Posterior cingulate gyrus (tissue), 11 donors: ENCODE measurements at regions of chr12 and their contacts with region 1.

Region 1: DNA sequence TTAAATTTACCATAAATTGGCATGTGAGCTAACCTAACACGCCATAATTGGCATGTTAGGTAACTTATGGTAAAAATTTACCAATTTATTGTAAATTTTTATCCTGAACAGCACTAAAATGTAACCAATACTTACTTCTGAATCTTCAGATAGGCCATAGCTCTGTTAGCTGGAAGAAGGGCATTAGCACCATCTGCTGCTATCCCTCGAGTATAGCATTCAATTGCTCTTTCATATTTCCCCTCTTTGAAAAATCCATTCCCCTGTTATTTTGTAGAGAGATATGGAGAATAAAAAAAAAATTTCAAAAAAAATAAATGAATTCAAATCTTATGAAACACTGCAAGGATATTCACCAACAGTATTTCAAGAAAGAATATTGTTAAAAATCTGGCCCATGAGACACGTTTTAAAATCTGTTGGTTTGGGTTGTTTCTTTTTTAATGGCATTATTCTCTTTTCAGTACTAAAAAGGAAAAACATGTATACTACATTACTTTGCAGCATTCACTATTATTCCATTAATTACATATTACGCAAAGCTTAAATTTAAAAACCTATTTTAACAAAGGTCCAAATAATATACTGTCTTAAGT is 19.1 kb downstream of the RPAP3 start:
- DNase-seq: no peak

Region 2: GRCh38 chr12:47032644-47033043 is 654.1 kb before region 1 on chr12:
- intact Hi-C with region 1: loop called (anchors 2 kb)
- DNase-seq: no peak

Region 3: GRCh38 chr12:47651368-47652254 is 35.1 kb before region 1 on chr12:
- intact Hi-C with region 1: loop called (anchors 1 kb)
- DNase-seq: peak; percentile 42 to 95 (median 68)